Caco-2 (cell line): ENCODE measurements at regions of chr22 and their contacts with region 1.

Region 1: DNA sequence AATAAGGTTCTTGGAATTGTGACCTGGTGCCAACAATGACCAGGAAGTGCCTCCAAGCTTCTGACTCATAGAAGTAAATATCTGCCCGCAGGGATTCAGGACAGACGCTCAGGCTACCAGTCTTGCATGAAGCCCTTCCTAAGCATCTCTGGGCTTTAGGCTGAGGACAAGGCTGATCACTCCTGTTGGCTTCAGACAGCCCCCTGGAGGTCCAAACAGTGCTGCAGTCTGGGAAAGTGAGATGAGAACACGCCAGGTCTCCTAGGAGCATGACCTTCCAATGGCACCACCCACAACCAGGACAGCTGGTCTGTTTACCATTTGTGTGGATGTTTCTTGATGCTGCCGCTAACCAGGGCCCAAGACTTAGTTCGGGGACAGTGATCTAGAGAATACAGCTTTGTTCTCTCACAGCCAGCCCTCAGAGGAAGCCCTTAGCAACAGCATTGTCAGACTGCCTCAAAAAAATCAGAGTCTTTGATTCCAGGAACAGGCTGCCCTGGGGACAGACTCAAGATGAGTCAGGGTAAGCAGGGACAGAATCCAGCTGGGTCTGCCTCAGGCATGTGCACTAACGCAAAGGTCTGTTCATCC is 111.2 kb downstream of the ZNF280B start:
- DNase-seq: peak in 1 of 2 experiments; percentile 28
- H3K4me3 ChIP-seq: no peak overlapping the region
- H3K4me3 Mint-ChIP-seq: no peak overlapping the region
- H3K27ac Mint-ChIP-seq: no peak overlapping the region
- H3K4me1 ChIP-seq: no peaks in the 10 kb centered on the region
- H3K4me1 Mint-ChIP-seq: peaks cover 6% of the 10 kb centered on the region
- H3K27me3 ChIP-seq: no peaks in the 10 kb centered on the region; the same call in 1 of the 2 replicates
- H3K27me3 Mint-ChIP-seq: peaks cover 9% of the 10 kb centered on the region
- CTCF ChIP-seq: peak in 1 of 2 experiments; percentile 47

Region 2: GRCh38 chr22:22349455-22349836 is 47.9 kb before region 1 on chr22:
- CTCF ChIA-PET with region 1: interaction called, 7 read pairs
- POLR2A ChIA-PET with region 1: no interaction called
- intact Hi-C with region 1: loop called (anchors 1 kb)
- DNase-seq: no peak
- H3K4me3 ChIP-seq: no peak overlapping the region
- H3K4me3 Mint-ChIP-seq: no peak overlapping the region
- H3K27ac Mint-ChIP-seq: no peak overlapping the region
- H3K4me1 ChIP-seq: 0 out of 2 replicates have a peak, but pooled peaks cover under 1% of the 10 kb centered on the region
- H3K4me1 Mint-ChIP-seq: peaks cover 5% of the 10 kb centered on the region
- H3K27me3 ChIP-seq: no peaks in the 10 kb centered on the region
- H3K27me3 Mint-ChIP-seq: peaks cover 18% of the 10 kb centered on the region
- CTCF ChIP-seq: no peak